ENCODE measurements at regions of chr14 and their contacts with region 1.

Region 1: DNA sequence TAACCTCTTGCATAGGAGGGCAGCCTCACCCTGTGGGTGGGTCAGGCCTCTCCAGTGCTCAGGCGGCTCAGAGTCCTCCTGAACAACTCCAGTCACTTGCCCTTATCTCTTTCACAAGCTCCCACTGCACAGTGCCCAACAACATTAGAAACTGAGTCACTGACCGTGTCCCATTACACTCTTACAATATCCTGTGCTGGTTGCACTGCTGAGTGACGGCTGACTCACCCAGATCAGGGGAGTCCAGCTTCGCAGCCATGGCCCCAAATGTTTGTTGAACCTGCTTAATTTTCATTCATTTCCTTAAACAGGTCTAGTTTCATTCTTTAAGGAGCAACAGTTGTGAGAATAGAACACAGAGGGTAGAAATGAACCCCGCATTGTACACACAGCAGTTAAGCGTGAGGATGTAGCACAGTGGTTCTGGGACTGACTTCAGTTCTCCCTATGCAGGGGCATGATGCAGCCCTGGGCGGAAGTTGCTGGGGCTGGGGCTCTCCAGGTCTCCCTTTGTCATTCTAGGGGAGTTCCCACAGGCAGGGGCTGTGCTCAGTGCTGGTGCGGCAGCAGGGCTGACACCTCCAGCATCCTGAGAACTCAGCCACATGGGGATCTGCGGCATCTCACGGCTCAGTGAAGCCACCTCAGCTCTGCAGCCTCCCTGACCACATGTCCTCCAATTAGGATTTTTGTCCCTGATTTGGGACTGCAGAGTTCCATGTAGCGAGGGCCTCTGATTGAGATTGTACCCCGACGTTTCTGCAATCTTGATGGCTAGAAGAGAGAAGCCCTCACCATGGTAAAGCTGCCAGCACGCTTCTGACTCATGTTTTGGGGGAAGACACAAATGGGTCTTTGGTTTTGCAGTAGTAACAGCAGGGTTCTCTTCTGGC is 16.1 kb downstream of the GPR68 start:
- DNase-seq: peak; percentile 95
- H3K4me3 Mint-ChIP-seq: peak overlapping the region; percentile 78
- H3K27ac Mint-ChIP-seq: peak overlapping the region; percentile 99
- H3K4me1 Mint-ChIP-seq: peaks cover 83% of the 10 kb centered on the region
- H3K27me3 Mint-ChIP-seq: no peaks in the 10 kb centered on the region

Region 2: DNA sequence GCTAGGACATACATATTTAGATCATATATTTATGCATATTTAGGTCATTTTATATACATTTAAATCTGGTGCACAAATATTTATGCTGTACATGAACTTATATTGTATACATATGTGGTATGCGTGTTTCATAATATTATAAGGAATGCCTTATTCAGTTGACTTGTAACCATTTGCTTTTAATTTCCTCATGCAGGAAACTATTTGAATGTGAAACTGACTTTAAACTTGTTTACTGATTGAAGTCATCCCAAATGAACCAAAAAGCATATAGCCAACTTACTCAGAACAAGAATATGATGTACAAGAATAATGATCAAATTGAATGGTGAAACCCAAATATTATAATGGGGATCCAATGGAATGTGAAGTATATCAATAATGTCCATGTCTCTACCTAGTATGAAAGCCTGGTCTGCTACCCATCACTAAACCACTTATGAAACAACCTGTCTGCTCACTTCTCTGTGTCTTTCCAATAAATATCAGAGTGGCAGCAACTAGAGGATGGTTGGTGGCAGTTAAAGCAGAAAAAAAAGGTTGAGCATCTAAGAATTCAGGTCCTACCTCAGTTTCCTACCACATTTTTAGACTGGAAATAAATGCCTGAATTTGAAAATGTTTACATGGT is 206.3 kb before region 1 on chr14:
- intact Hi-C with region 1: loop called (anchors 5 kb)
- DNase-seq: peak; percentile 82
- H3K4me3 Mint-ChIP-seq: peak overlapping the region; percentile 83
- H3K27ac Mint-ChIP-seq: peak overlapping the region; percentile 93
- H3K4me1 Mint-ChIP-seq: peaks cover 41% of the 10 kb centered on the region
- H3K27me3 Mint-ChIP-seq: no peaks in the 10 kb centered on the region

Region 3: GRCh38 chr14:91193069-91193468 is 35.3 kb before region 1 on chr14:
- intact Hi-C with region 1: loop called (anchors 1 kb)
- DNase-seq: no peak
- H3K4me3 Mint-ChIP-seq: no peak overlapping the region
- H3K27ac Mint-ChIP-seq: no peak overlapping the region
- H3K4me1 Mint-ChIP-seq: peaks cover 39% of the 10 kb centered on the region
- H3K27me3 Mint-ChIP-seq: no peaks in the 10 kb centered on the region

Region 4: GRCh38 chr14:91249841-91250616 is 21.7 kb after region 1 on chr14:
- intact Hi-C with region 1: loop called (anchors 1 kb)
- DNase-seq: peak; percentile 89
- H3K4me3 Mint-ChIP-seq: peak overlapping the region; percentile 74
- H3K27ac Mint-ChIP-seq: peak overlapping the region; percentile 95
- H3K4me1 Mint-ChIP-seq: peaks cover 68% of the 10 kb centered on the region
- H3K27me3 Mint-ChIP-seq: no peaks in the 10 kb centered on the region

Region 5: DNA sequence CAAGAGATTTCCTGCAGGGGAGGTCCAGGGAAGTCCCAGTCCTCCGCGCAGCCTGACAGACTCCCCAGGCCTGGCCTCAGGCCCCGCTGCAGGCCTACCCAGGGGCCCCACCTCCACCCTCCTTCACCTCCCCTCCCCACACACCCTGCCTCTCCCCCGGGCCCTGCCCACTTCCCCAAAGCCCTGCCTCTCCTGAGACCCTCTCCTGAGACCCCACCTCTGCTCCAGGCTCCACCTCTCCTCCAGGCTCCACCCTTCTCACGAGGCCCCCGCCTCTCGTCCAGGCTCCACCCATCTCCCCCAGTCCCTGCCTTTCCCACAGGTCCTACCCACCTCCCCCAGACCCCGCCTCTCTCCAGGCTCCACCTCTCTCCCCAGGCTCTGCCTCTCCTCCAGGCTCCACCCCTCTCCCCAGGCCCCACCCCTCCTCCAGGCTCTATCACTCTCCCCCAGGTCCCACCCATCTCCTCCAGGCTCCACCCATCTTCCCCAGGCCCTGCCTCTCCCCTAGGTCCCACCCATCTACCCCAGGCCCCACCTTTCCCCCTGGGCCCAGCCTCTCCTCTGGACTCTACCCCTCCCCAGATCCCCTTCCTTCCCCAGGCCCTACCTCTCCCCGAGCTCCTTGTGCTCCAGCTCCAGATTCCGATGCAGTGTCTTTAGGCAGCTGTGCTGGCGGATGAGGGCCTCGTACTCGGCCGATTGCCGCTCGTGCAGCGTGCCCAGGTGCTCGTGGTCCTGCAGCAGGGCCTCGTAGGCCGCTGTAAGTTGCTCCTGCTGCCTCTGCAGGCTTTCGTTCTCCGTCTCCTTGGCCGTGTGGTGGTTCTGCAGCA is 74.9 kb after region 1 on chr14:
- intact Hi-C with region 1: loop called (anchors 1 kb)
- DNase-seq: peak; percentile 86
- H3K4me3 Mint-ChIP-seq: peak overlapping the region; percentile 54
- H3K27ac Mint-ChIP-seq: peak overlapping the region; percentile 92
- H3K4me1 Mint-ChIP-seq: peaks cover 52% of the 10 kb centered on the region
- H3K27me3 Mint-ChIP-seq: no peaks in the 10 kb centered on the region

Measured in activated CD4-positive, alpha-beta T cell treated with anti-CD3 and anti-CD28 coated beads, Interleukin-2, amount 10 ng/mL, durations not matched to agents 24 days and 14 days (primary cell).